ENCODE measurements at regions of chr2 and their contacts with region 1.

Region 1: DNA sequence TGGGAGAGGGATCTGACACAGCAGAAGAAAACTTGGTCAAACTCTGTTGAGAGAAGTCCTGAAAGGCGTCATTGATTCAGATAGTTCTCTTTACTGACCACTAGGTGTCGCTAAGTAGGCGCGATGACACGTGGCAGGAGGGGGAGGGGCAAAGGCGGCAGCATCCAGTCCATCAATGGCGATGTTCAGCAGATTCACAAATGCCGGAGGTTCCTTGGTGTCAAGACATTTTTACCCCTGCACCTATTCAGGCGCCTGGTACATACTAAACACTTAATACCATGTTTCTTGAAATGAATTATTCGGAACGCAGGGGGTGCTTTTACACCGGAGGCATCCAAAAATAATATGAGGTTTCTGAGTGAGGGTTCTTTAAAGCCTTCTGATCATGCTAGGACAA is 3.0 kb upstream of the PLEK start:
- DNase-seq: peak; percentile 88
- H3K4me3 Mint-ChIP-seq: peak overlapping the region; percentile 17
- H3K27ac Mint-ChIP-seq: no peak overlapping the region
- H3K4me1 Mint-ChIP-seq: peaks cover 9% of the 10 kb centered on the region
- H3K27me3 Mint-ChIP-seq: peaks cover 3% of the 10 kb centered on the region

Region 2: GRCh38 chr2:68379184-68379708 is 17.2 kb after region 1 on chr2:
- CTCF ChIA-PET with region 1: interaction called, 4 read pairs
- intact Hi-C with region 1: loop called (anchors 1 kb)
- DNase-seq: peak; percentile 66
- H3K4me3 Mint-ChIP-seq: no peak overlapping the region
- H3K27ac Mint-ChIP-seq: peak overlapping the region; percentile 47
- H3K4me1 Mint-ChIP-seq: peaks cover 18% of the 10 kb centered on the region
- H3K27me3 Mint-ChIP-seq: peaks cover 22% of the 10 kb centered on the region

Region 3: DNA sequence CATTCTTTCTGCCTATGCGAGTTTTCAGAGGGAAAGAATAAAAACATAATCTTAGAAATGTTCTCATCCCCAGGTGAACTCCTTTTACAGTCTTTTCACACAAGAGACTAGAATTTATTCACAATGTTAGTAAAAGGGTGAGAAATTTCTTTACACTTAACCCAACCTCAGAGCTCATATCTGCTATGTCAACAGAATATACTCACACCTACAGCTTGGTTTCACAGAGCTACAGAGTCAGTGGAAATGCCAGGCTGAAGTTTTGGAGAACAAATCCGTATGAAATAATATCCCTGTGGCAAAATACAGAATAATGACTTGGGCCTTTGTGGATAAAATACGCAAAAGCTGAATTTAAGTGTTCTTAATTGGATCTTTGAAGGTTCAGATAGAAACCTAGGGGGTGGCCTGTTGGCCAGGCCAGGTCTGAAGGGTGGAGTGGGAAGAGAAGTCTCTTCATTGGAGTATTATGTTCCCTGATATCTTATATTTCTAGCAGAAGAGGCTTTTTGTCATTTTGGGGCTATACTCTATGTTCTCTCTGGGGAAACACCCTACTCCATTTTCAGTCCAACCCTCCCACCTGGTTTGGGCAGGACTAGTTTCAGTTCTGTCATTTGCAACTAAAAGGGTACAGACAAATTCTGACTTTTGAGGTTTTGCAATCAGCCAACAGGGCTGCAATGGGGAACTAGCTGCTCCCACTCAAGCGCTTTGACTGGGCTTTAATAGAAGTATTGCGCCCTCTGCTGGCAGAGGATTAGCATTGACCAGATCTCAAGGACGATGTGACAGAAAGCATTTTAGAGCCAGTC is 79.3 kb after region 1 on chr2:
- CTCF ChIA-PET with region 1: interaction called, 85 read pairs
- intact Hi-C with region 1: loop called (anchors 1 kb)
- DNase-seq: peak; percentile 92
- H3K4me3 Mint-ChIP-seq: no peak overlapping the region
- H3K27ac Mint-ChIP-seq: peak overlapping the region; percentile 28
- H3K4me1 Mint-ChIP-seq: peaks cover 15% of the 10 kb centered on the region
- H3K27me3 Mint-ChIP-seq: peaks cover 2% of the 10 kb centered on the region

Region 4: DNA sequence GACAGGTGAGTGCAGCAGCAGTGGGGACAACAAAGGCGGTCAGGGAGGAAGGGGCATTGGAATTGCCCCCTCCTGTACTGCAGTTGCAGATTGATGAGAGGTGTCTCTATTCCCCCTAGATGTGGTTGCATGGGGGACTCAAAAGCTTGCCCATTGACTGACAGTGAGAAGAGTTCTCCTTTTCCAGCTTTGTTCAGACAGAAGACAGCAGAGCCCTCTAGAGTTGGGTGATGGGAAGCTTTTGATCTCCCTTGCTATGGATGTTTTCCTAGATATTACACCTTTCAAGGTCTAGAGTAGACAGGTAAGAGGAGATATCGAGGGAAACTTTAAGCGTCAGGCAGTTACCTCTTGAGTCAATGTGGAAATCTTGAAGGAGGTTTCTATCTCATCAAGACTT is 284.2 kb after region 1 on chr2:
- CTCF ChIA-PET with region 1: no interaction called
- intact Hi-C with region 1: loop called (anchors 5 kb)
- DNase-seq: no peak
- H3K4me3 Mint-ChIP-seq: no peak overlapping the region
- H3K27ac Mint-ChIP-seq: no peak overlapping the region
- H3K4me1 Mint-ChIP-seq: peaks cover 18% of the 10 kb centered on the region
- H3K27me3 Mint-ChIP-seq: peaks cover 59% of the 10 kb centered on the region

Region 5: GRCh38 chr2:69100220-69100723 is 738.2 kb after region 1 on chr2:
- CTCF ChIA-PET with region 1: no interaction called
- intact Hi-C with region 1: no loop called
- DNase-seq: no peak
- H3K4me3 Mint-ChIP-seq: no peak overlapping the region
- H3K27ac Mint-ChIP-seq: no peak overlapping the region
- H3K4me1 Mint-ChIP-seq: no peaks in the 10 kb centered on the region
- H3K27me3 Mint-ChIP-seq: peaks cover under 1% of the 10 kb centered on the region

Region 6: GRCh38 chr2:69704446-69704845 is 1342.4 kb after region 1 on chr2:
- CTCF ChIA-PET with region 1: no interaction called
- intact Hi-C with region 1: no loop called
- DNase-seq: no peak
- H3K4me3 Mint-ChIP-seq: no peak overlapping the region
- H3K27ac Mint-ChIP-seq: no peak overlapping the region
- H3K4me1 Mint-ChIP-seq: peaks cover 8% of the 10 kb centered on the region
- H3K27me3 Mint-ChIP-seq: no peaks in the 10 kb centered on the region

Measured in activated naive CD4-positive, alpha-beta T cell treated with anti-CD3 and anti-CD28 coated beads for 36 hours (primary cell).